Activated naive CD4-positive, alpha-beta T cell treated with anti-CD3 and anti-CD28 coated beads, Interleukin-2, amount 10 ng/mL, durations not matched to agents 7 days and 5 days (primary cell): ENCODE measurements at regions of chr15 and their contacts with region 1.

Region 1: GRCh38 chr15:40506964-40507571 is 36.3 kb downstream of the CHST14 start:
- DNase-seq: peak; percentile 78
- H3K4me3 Mint-ChIP-seq: peak overlapping the region; percentile 21
- H3K27ac Mint-ChIP-seq: no peak overlapping the region
- H3K4me1 Mint-ChIP-seq: peaks cover 23% of the 10 kb centered on the region
- H3K27me3 Mint-ChIP-seq: peaks cover 78% of the 10 kb centered on the region

Region 2: DNA sequence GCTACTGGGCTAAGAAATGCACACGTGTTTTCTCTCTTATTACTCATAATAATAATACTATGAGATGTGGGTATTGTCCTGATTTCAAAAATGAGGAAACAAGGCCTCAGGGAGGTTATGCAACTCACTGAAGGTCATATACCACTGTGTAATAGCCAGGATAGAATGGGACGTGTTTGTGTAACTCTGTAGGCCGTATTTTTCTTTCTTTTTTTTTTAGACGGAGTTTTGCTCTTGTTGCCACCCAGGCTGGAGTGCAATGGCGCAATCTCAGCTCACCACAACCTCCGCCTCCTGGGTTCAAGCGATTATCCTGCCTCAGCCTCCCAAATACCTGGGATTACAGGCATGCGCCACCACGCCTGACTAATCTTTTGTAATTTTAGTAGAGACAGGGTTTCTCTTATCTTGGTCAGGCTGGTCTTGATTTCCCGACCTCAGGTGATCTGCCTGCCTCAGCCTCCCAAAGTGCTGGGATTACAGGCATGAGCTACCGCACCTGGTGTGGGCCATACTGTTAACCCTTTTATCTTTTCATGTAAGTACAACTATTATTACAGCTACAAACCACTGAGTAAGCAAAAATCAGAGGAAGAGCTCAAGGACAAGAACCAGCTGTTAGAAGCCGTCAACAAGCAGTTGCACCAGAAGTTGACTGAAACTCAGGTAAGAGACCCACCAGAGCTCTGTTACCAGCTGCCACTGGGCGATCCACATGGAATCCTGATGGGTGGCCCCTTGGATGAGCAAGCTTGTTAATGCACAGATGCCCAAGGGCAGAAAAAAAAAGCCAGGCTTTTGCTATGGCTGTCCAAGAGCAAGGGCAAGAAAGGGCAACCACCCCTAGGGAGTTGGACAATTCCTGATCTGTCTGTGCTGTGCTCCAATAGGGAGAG is 117.9 kb before region 1 on chr15:
- CTCF ChIA-PET with region 1: no interaction called
- DNase-seq: no peak
- H3K4me3 Mint-ChIP-seq: no peak overlapping the region
- H3K27ac Mint-ChIP-seq: peak overlapping the region; percentile 76
- H3K4me1 Mint-ChIP-seq: peaks cover 13% of the 10 kb centered on the region
- H3K27me3 Mint-ChIP-seq: no peaks in the 10 kb centered on the region

Region 3: GRCh38 chr15:40454904-40455391 is 52.1 kb before region 1 on chr15:
- CTCF ChIA-PET with region 1: interaction called, 12 read pairs
- DNase-seq: peak; percentile 51
- H3K4me3 Mint-ChIP-seq: peak overlapping the region; percentile 62
- H3K27ac Mint-ChIP-seq: peak overlapping the region; percentile 90
- H3K4me1 Mint-ChIP-seq: peaks cover 75% of the 10 kb centered on the region
- H3K27me3 Mint-ChIP-seq: no peaks in the 10 kb centered on the region